ENCODE measurements at regions of chr6 and their contacts with region 1.

Region 1: GRCh38 chr6:146389740-146390139 is 153.9 kb upstream of the RAB32 start:
- DNase-seq: no peak

Region 2: DNA sequence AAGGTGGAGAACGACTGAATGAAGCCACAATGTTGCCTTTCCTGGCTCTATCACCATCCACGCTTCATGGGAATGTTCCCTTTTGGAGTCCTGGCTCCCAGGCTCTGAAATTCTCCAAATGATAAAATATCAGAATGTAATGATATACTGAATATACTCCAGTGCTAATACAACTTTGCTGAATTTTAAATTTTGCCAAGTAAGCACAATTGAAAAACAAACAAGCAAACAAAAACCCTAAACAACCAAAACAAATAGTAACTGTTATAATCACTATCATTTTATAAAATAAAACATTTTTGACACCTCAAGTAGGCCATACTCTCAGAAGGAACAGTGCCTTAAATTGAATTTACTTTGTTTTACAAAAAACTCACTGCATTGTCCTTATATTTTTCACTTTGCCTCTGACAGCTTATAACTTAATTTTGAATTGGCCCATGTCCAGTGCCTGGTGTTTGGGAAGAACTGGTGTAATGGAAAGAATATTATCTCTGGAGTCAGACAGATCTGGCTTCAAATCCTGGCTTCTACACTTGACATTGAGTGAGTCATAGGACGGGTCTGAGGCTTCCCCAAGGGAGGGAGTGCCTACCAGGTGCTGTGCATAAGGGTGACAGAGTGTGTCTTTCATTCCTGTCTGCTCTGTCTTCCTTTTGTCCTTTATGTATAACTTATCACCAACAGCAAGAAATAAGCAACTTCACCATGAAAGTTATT is 1352.7 kb before region 1 on chr6:
- intact Hi-C with region 1: no loop called
- DNase-seq: no peak

Region 3: GRCh38 chr6:146433881-146434731 is 44.4 kb after region 1 on chr6:
- intact Hi-C with region 1: no loop called
- DNase-seq: no peak

Region 4: DNA sequence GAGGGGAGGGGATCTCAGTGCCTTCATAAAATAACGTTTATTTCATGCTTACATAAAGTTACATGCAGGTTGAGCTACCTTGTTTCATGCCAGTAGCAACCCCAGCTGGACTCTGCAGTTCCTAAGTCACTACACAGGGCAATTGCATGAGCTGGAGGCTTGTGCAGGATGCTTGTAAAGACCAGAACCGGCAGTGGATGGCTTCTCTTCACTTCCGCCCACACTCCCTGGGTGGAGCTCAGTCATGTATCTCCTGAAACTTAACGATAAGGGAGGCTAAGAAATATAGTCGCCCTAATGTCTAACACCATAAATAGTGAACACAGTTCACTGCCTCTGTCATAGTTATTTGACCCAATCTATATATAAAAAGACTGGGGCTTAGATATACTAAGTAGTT is 54.4 kb after region 1 on chr6:
- intact Hi-C with region 1: loop called in 1 of 2 experiments (anchors 1 kb)
- DNase-seq: no peak

Measured in posterior vena cava (tissue), 2 donors.